Right cardiac atrium (tissue), 5 donors: ENCODE measurements at regions of chr3 and their contacts with region 1.

Region 1: GRCh38 chr3:188037216-188037718 is 116.7 kb upstream of the LPP start:
- DNase-seq: peak in 1 of 3 donors; percentile 60
- ATAC-seq: peak; percentile 57 to 84
- H3K4me3 ChIP-seq: no peak overlapping the region
- H3K27ac ChIP-seq: no peak overlapping the region
- H3K4me1 ChIP-seq: peaks cover 2% of the 10 kb centered on the region
- H3K27me3 ChIP-seq: no peaks in the 10 kb centered on the region

Region 2: GRCh38 chr3:187986514-187986934 is 50.7 kb before region 1 on chr3:
- intact Hi-C with region 1: loop called in 1 of 4 experiments (anchors 10 kb)
- DNase-seq: no peak
- ATAC-seq: peak; percentile 9 to 68
- H3K4me3 ChIP-seq: no peak overlapping the region
- H3K27ac ChIP-seq: no peak overlapping the region
- H3K4me1 ChIP-seq: no peaks in the 10 kb centered on the region
- H3K27me3 ChIP-seq: no peaks in the 10 kb centered on the region

Region 3: GRCh38 chr3:188154014-188154808 is 116.9 kb after region 1 on chr3 and contains the start of gene LPP:
- intact Hi-C with region 1: no loop called
- DNase-seq: peak; percentile 80 to 93 (median 92)
- ATAC-seq: peak; percentile 93
- H3K4me3 ChIP-seq: peak within 1 kb of the TSS; percentile 82
- H3K27ac ChIP-seq: peak within 1 kb of the TSS; percentile 80
- H3K4me1 ChIP-seq: peaks cover 23% of the 10 kb centered on the region
- H3K27me3 ChIP-seq: no peaks in the 10 kb centered on the region
- total RNA-seq, gene LPP: 141 to 205 (median 171) TPM